ENCODE measurements at regions of chr9 and their contacts with region 1.

Region 1: DNA sequence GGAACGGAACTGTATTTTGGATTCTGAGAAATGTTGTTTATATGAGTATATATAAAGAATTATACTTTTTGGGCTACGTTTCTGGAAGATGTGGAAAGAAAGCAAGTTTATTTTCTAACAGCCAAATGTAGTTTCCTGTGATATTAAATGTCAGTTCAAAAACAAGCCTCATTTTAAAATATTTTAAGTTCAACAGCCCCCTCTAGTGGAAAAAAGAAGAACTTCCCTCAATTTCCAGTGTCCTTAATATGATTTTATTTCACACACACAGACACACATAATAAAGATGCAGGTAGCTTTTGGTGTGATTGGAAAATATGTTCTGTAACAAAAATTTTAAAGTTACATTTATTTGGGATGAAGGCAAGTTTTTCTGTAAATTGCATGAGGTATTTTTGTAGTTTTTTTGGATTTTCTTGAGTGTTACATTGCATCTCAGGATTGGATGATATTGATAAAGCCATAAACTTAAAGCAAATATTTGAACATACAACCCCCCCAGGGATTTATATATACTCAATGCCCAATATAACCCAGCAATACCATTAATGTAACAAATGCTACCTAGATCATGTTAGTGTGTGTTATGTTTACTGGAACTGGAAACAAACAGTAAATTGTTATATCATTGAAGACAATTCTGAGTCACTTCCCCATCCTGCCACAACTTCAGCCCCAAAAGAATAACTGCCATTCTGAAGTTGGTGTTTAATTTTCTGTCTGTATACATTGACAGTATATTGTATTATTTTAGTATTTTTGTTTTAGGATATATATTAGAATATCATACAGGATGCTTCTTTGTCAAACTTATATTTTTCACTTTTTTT is 54.0 kb downstream of the CCDC171 start:
- DNase-seq: peak; percentile 6 to 28 (median 12)
- ATAC-seq: peak; percentile 57; the same call in 1 of the 3 replicates
- H3K4me3 ChIP-seq: no peak overlapping the region
- H3K27ac ChIP-seq: no peak overlapping the region
- H3K4me1 ChIP-seq: no peaks in the 10 kb centered on the region
- H3K27me3 ChIP-seq: no peaks in the 10 kb centered on the region
- CTCF ChIP-seq: peak in 2 of 3 experiments; percentile 26 to 65; a peak in 3 of 6 replicates
- EP300 ChIP-seq: no peak
- POLR2A ChIP-seq: no peak
- RAD21 ChIP-seq: peak; percentile 48 to 65

Region 2: GRCh38 chr9:15211160-15211814 is 395.6 kb before region 1 on chr9:
- CTCF ChIA-PET with region 1: interaction called, 8 read pairs
- POLR2A ChIA-PET with region 1: no interaction called
- in situ Hi-C with region 1: loop called (anchors 25 kb)
- intact Hi-C with region 1: loop called (anchors 1 kb)
- DNase-seq: peak; percentile 21 to 62 (median 30)
- ATAC-seq: peak; percentile 58; the same call in 1 of the 3 replicates
- H3K4me3 ChIP-seq: no peak overlapping the region
- H3K27ac ChIP-seq: no peak overlapping the region
- H3K4me1 ChIP-seq: no peaks in the 10 kb centered on the region
- H3K27me3 ChIP-seq: no peaks in the 10 kb centered on the region
- CTCF ChIP-seq: peak; percentile 64 to 69 (median 64)
- EP300 ChIP-seq: no peak
- POLR2A ChIP-seq: no peak
- RAD21 ChIP-seq: peak; percentile 65 to 72

Region 3: DNA sequence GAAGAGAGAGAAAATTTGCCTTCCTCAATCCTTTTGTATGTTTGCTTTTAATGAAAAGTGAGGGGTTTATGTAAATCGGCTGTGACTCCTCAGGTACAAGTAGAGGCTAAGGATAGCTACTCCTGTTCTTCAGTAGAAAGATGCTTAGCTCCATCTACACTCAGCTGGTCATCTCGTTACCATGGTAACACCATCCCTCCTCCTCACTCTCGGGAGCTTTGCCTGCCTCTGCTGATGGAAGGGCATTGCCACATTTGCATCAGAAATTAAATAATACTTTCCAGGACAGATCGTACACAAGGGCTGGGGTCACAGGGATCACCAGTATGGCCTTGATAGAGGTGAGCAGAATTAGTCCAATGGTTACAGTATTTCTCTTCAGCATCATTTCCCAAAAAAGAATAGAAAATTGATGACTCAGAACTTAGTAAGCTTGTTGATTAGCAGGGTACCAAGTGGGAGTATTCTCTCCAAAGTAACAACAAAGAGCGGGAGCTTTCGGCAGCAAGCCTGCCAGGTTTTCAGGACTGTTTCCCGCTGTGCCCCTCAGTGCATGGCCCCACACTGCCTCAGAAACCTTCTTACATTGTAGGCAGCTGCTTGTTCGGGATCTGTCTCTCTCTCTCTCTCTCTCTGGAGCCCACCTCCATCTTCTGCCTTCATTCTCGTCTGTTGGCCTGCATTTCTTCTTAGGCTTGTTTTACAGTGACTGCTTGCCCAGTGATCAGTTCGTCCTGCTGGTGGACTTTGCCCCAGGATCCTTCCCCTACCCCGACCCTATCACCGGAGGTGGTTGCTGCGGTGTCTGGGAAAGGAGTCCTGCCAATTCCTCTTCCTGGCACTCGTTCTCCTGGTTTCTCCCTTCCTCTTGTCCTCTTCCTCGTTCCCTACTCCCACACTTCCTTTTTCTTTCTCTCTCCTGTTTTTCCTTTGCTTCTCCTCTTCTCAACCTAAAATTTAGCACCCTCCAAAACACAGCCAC is 236.1 kb before region 1 on chr9:
- CTCF ChIA-PET with region 1: no interaction called
- POLR2A ChIA-PET with region 1: no interaction called
- in situ Hi-C with region 1: no loop called
- intact Hi-C with region 1: no loop called
- DNase-seq: peak in 3 of 4 experiments; percentile 3 to 8 (median 7)
- ATAC-seq: no peak
- H3K4me3 ChIP-seq: no peak overlapping the region
- H3K27ac ChIP-seq: no peak overlapping the region
- H3K4me1 ChIP-seq: no peaks in the 10 kb centered on the region; a peak in 1 of 5 replicates
- H3K27me3 ChIP-seq: no peaks in the 10 kb centered on the region
- CTCF ChIP-seq: no peak
- EP300 ChIP-seq: no peak
- POLR2A ChIP-seq: no peak
- RAD21 ChIP-seq: no peak